ENCODE measurements at regions of chr20 and their contacts with region 1.

Region 1: DNA sequence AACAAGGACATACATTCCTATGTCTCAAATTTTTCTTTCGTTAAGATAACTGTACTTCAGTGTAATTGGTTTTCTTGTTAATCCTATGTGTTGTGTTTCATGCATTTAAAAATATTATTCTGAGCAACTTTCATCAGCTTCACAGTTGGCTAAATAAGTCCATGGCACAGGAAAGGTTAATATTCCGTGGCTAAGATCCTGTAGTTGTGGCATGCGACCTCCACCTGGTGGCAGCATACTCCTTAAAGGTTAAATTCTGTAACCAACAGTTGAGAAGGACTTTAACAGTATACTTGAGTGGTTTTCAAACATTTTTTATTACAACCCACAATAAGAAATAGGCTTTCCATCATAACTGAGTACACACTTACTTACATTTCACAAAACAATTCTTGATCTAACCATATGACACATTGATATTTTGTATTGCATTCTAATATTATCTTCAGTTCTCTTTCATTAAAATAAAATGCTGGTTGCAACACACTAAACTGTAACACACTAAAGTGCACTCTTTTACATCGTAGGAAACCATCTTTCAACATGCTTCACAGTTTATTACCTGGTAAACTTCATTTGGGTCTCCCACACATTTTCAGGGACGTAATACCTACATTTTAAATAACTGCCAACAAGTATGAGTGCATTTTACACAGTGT is 118.3 kb downstream of the SLX4IP start:
- DNase-seq: peak; percentile 69
- H3K4me3 ChIP-seq: no peak overlapping the region
- H3K27ac ChIP-seq: no peak overlapping the region
- H3K4me1 ChIP-seq: peaks cover 55% of the 10 kb centered on the region
- H3K27me3 ChIP-seq: no peaks in the 10 kb centered on the region
- CTCF ChIP-seq: peak; percentile 81 to 95

Region 2: GRCh38 chr20:9616833-9617489 is 936.5 kb before region 1 on chr20:
- CTCF ChIA-PET with region 1: no interaction called
- dilution Hi-C with region 1: no loop called
- in situ Hi-C with region 1: no loop called
- intact Hi-C with region 1: loop called (anchors 1 kb)
- DNase-seq: peak; percentile 38
- H3K4me3 ChIP-seq: no peak overlapping the region
- H3K27ac ChIP-seq: no peak overlapping the region
- H3K4me1 ChIP-seq: no peaks in the 10 kb centered on the region
- H3K27me3 ChIP-seq: peaks cover 2% of the 10 kb centered on the region
- CTCF ChIP-seq: peak; percentile 76 to 81

Region 3: DNA sequence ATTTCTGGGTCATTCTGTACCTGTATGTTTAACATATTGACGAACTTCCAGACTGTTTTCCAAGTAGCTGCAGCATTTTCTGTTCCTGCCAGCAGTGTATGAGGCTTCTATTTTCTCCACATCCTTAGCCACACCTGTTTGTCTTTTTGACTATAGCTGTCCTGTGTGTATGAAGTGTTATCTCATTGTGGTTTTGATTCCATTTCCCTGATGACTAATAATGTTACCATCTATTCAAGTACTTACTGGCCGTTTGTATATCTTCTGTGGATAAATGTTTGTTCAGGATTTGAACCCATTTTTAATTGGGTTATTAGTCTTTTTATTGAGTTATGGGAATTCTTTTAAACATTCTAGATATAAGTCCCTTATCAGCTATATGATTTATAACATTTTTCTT is 25.2 kb after region 1 on chr20:
- CTCF ChIA-PET with region 1: no interaction called
- dilution Hi-C with region 1: no loop called
- in situ Hi-C with region 1: no loop called
- intact Hi-C with region 1: no loop called
- DNase-seq: peak; percentile 90
- H3K4me3 ChIP-seq: no peak overlapping the region
- H3K27ac ChIP-seq: peak overlapping the region; percentile 31
- H3K4me1 ChIP-seq: peaks cover 48% of the 10 kb centered on the region
- H3K27me3 ChIP-seq: no peaks in the 10 kb centered on the region
- CTCF ChIP-seq: no peak

Region 4: DNA sequence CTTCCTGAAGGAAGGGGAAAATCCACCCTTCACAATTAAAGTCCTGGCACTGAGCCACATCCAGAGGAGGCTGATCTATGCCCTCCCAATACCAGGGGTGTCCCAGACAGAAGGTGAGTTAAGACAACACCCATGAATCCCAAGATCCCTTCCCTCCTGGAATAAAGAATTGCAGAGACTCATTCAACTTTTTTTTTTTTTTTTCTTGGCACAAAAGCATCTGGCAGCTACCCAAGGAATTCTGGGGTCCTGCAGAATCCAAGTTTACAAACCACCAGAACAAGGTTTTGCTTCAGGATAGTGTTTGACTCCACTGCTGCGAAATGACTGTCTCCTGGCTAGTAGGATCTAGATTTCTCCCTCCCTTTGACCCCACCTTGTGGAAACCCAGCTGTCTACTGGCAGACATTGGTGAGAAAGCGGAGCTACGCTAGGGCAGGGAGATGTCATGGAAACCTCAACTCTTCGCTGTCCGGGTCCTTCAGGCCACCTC is 82.9 kb after region 1 on chr20:
- CTCF ChIA-PET with region 1: no interaction called
- dilution Hi-C with region 1: loop called (anchors 5 kb)
- in situ Hi-C with region 1: loop called (anchors 5 to 10 kb)
- intact Hi-C with region 1: loop called (anchors 1 kb)
- DNase-seq: peak; percentile 31
- H3K4me3 ChIP-seq: no peak overlapping the region
- H3K27ac ChIP-seq: peak overlapping the region; percentile 50
- H3K4me1 ChIP-seq: peaks cover 57% of the 10 kb centered on the region
- H3K27me3 ChIP-seq: no peaks in the 10 kb centered on the region
- CTCF ChIP-seq: peak in 1 of 2 donors; percentile 20

Region 5: DNA sequence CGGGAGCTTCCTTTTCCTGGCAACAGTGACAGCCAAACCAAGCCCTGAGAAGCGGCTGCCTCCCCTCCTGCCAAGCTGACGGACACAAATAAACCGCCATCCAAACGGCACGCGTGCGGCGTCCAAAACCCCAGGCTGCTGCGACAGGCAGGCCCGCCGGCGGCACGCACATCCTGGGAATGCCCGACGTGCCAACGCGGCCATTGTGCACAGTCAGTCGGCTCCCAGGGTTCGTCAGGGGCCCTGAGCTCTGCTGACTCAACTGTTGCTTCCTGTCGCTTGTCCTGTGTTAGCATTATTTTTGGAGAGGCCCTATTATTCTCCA is 113.6 kb after region 1 on chr20:
- CTCF ChIA-PET with region 1: no interaction called
- dilution Hi-C with region 1: no loop called
- in situ Hi-C with region 1: no loop called
- intact Hi-C with region 1: loop called (anchors 1 kb)
- DNase-seq: peak; percentile 73
- H3K4me3 ChIP-seq: peak overlapping the region in 2 of 3 experiments; percentile 12 to 18
- H3K27ac ChIP-seq: peak overlapping the region; percentile 87
- H3K4me1 ChIP-seq: peaks cover 68% of the 10 kb centered on the region
- H3K27me3 ChIP-seq: no peaks in the 10 kb centered on the region
- CTCF ChIP-seq: no peak

Region 6: GRCh38 chr20:11117808-11118528 is 564.5 kb after region 1 on chr20:
- CTCF ChIA-PET with region 1: no interaction called
- dilution Hi-C with region 1: no loop called
- in situ Hi-C with region 1: no loop called
- intact Hi-C with region 1: loop called (anchors 10 kb)
- DNase-seq: peak; percentile 99
- H3K4me3 ChIP-seq: no peak overlapping the region
- H3K27ac ChIP-seq: peak overlapping the region; percentile 99
- H3K4me1 ChIP-seq: peaks cover 33% of the 10 kb centered on the region
- H3K27me3 ChIP-seq: no peaks in the 10 kb centered on the region
- CTCF ChIP-seq: peak in 1 of 2 donors; percentile 0

Region 7: GRCh38 chr20:11350126-11351005 is 796.9 kb after region 1 on chr20:
- CTCF ChIA-PET with region 1: no interaction called
- dilution Hi-C with region 1: no loop called
- in situ Hi-C with region 1: no loop called
- intact Hi-C with region 1: loop called (anchors 1 kb)
- DNase-seq: peak; percentile 98
- H3K4me3 ChIP-seq: no peak overlapping the region
- H3K27ac ChIP-seq: peak overlapping the region; percentile 59
- H3K4me1 ChIP-seq: peaks cover 25% of the 10 kb centered on the region
- H3K27me3 ChIP-seq: no peaks in the 10 kb centered on the region
- CTCF ChIP-seq: peak; percentile 28 to 59

Measured in mammary epithelial cell (primary cell).